ENCODE measurements at regions of chr1 and their contacts with region 1.

Region 1: DNA sequence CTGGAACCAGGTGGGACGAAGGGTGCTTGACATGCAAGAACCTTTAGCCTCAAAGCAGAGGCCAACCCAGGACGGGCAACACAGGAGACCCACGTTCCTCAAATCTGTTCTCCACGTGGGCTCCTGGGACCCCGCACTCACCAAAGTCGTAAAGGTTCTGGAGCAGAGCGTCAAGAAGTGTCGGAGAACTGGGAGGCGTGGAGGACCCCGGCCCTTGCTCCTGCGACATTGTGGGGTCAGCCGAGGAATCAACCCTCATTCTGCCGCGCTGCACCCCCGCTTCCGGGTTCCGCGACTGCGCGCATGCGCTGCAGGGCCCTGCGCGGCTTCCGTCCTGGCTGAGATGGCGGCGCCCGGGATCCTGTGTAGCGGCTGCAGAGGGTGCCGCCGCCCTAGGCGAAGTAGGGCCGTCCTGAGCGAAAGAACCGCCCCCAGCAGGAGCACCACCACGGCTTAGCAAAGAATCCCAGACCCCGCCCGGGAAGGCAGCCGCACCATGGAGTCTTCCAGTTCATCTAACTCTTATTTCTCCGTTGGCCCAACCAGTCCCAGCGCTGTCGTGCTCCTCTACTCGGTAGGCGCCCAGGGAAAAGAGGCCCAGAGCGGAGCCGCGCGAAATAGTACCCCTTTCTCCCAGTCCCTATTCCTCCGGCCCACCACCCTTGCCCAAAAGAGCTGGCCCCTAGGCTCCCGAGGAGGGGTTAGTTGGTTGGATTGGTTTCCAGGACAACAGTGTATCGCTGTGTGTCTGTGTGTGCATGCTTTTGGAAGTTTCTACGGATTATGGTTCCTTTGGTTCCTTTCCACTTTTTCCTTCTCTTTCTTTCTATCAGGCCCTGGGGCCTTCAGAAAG is at the start of gene GNPAT:
- DNase-seq: peak; percentile 92 to 96
- ATAC-seq: peak; percentile 97 to 98 (median 97)
- H3K4me3 ChIP-seq: peak within 1 kb of the TSS; percentile 80
- H3K4me3 Mint-ChIP-seq: peak within 1 kb of the TSS; percentile 99
- H3K27ac ChIP-seq: peak within 1 kb of the TSS; percentile 79
- H3K27ac Mint-ChIP-seq: peak within 1 kb of the TSS; percentile 93 to 96
- H3K4me1 ChIP-seq: peaks cover 19% of the 10 kb centered on the region
- H3K4me1 Mint-ChIP-seq: peaks cover 78 to 79% of the 10 kb centered on the region in 2 donors
- H3K27me3 ChIP-seq: no peaks in the 10 kb centered on the region
- H3K27me3 Mint-ChIP-seq: no peaks in the 10 kb centered on the region
- CTCF ChIP-seq: no peak
- total RNA-seq, gene GNPAT: 20.5 to 29.3 (median 23.1) TPM

Region 2: DNA sequence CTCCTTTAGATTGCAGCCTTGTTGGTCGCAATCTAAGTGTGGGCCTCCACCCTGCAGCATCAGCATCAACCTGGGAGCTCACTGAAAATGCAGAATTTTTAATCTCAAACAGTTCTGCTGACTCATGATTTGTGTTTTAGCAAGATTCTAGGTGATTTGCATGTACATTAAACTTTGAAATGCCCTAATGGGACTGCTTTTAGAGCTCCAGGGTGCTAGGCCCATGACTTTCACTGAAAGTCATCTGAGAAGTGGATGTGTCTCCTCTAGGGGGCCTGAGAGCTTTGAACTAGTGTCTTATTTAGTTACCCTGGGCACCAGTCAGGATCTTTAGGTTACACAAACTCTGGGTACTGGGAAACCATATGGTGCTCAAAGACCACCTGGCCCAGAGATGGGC is 70.2 kb before region 1 on chr1:
- intact Hi-C with region 1: no loop called
- DNase-seq: no peak
- ATAC-seq: no peak
- H3K4me3 ChIP-seq: no peak overlapping the region
- H3K4me3 Mint-ChIP-seq: no peak overlapping the region
- H3K27ac ChIP-seq: no peak overlapping the region
- H3K27ac Mint-ChIP-seq: no peak overlapping the region
- H3K4me1 ChIP-seq: no peaks in the 10 kb centered on the region
- H3K4me1 Mint-ChIP-seq: no peaks in the 10 kb centered on the region
- H3K27me3 ChIP-seq: peaks cover 6% of the 10 kb centered on the region
- H3K27me3 Mint-ChIP-seq: peaks cover 22 to 47% of the 10 kb centered on the region in 2 donors
- CTCF ChIP-seq: no peak

Region 3: GRCh38 chr1:231211005-231211857 is 29.9 kb before region 1 on chr1:
- intact Hi-C with region 1: no loop called
- DNase-seq: peak; percentile 76 to 93
- ATAC-seq: peak; percentile 92 to 95 (median 95)
- H3K4me3 ChIP-seq: peak overlapping the region; percentile 31
- H3K4me3 Mint-ChIP-seq: peak overlapping the region; percentile 87
- H3K27ac ChIP-seq: peak overlapping the region; percentile 28
- H3K27ac Mint-ChIP-seq: peak overlapping the region; percentile 58 to 91
- H3K4me1 ChIP-seq: peaks cover 15% of the 10 kb centered on the region
- H3K4me1 Mint-ChIP-seq: peaks cover 8 to 10% of the 10 kb centered on the region in 2 donors
- H3K27me3 ChIP-seq: no peaks in the 10 kb centered on the region
- H3K27me3 Mint-ChIP-seq: no peaks in the 10 kb centered on the region
- CTCF ChIP-seq: peak; percentile 91

Region 4: GRCh38 chr1:231337472-231338269 is 96.6 kb after region 1 on chr1 and contains the start of gene EXOC8:
- intact Hi-C with region 1: loop called (anchors 2 kb)
- DNase-seq: peak; percentile 99 to 100
- ATAC-seq: peak; percentile 76 to 89 (median 86)
- H3K4me3 ChIP-seq: peak within 1 kb of the TSS; percentile 95
- H3K4me3 Mint-ChIP-seq: peak within 1 kb of the TSS; percentile 100
- H3K27ac ChIP-seq: peak within 1 kb of the TSS; percentile 97
- H3K27ac Mint-ChIP-seq: peak within 1 kb of the TSS; percentile 99 to 100
- H3K4me1 ChIP-seq: peaks cover 39% of the 10 kb centered on the region
- H3K4me1 Mint-ChIP-seq: peaks cover 53 to 64% of the 10 kb centered on the region in 2 donors
- H3K27me3 ChIP-seq: no peaks in the 10 kb centered on the region
- H3K27me3 Mint-ChIP-seq: no peaks in the 10 kb centered on the region
- CTCF ChIP-seq: no peak
- total RNA-seq, gene EXOC8: 29.0 to 37.1 (median 34.7) TPM

Region 5: DNA sequence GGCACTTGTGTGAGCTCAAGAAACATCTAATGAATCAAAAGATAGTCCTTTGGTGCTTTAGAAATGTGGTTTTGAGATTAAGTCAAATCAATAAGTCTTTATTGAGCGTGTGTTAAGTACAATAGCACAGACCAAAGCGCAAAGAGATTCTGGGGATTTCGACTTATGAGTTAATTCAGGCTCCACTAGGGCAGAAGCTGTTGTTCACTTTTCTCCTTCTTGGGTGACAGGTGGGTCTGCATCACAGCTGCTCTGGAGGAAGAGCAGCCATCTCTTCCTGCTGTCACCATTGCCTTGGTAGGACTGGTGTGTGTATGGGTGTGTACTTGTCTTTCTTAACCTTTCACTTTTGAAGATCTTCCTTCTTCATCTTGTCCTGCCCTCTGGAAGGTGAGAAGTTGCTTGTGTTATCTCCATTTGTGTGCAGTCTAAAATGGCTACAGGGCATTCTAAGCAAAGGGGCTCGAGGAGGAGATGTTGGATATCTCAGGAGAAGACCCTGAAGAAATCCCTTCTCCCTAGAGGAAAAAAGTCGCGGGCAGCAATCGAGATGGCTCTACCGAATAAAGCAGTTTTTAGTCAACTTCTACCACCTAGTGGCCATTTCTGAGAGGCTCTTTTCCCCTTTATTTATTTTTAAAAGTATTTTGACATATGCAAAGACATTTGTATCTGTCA is 362.6 kb after region 1 on chr1:
- intact Hi-C with region 1: no loop called
- DNase-seq: peak in 1 of 2 donors; percentile 77
- ATAC-seq: peak; percentile 61 to 70 (median 68)
- H3K4me3 ChIP-seq: peak overlapping the region; percentile 40
- H3K4me3 Mint-ChIP-seq: peak overlapping the region; percentile 91
- H3K27ac ChIP-seq: no peak overlapping the region
- H3K27ac Mint-ChIP-seq: peak overlapping the region; percentile 27 to 55
- H3K4me1 ChIP-seq: peaks cover 14% of the 10 kb centered on the region
- H3K4me1 Mint-ChIP-seq: peaks cover 28 to 29% of the 10 kb centered on the region in 2 donors
- H3K27me3 ChIP-seq: no peaks in the 10 kb centered on the region
- H3K27me3 Mint-ChIP-seq: no peaks in the 10 kb centered on the region
- CTCF ChIP-seq: peak; percentile 75

Measured in natural killer cell (primary cell).